ENCODE measurements at regions of chr11 and their contacts with region 1.

Region 1: DNA sequence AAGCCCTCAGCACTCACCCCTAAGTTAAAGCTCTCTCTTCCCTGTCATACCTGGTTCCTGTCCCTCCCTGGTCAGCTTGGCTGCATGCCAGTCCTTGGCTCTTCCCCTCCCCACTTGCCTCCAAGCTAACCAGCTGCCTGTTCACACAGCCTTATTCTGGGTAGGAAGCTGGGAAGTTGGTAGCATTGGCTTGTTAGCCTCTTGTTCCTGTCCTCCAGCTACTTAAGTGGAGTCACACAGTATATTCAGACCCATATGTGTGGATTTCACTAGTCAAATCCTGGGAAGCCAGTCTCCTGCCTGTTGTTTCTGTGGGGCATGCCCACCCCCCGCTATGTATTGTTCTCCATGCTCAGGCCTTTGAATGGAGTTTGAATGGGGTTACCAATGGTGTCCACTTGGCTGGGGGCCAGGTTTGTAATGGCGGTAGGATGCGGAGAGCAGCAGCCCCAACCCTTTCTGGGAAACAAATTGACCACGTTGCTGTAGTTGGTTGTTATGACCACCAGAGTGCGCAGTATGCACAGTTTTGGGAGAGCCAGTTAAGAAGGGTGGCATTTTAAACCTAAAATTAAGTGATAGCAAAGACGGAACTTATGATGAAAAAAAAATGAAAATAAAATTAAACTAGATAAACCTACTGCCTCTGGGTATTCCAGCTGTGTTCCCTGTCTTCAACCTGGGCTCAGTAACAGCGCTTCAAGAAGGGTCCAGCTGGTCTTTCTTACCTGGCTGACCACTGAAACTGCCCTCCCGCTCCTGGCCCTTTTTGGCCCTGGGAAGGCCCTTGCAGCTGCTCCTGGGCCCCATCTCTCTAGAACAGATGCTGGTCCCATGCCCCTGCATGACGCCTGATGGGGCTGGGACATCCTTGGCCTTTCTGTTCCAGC is 10.7 kb upstream of the RPS3 start:
- DNase-seq: peak; percentile 85
- H3K4me3 ChIP-seq: peak overlapping the region in 1 of 2 experiments; percentile 35; a peak in 1 of 4 replicates
- H3K27ac ChIP-seq: no peak overlapping the region
- H3K4me1 ChIP-seq: peaks cover 0 to 9% of the 10 kb centered on the region in 2 experiments; a peak in 1 of 4 replicates
- H3K27me3 ChIP-seq: no peaks in the 10 kb centered on the region
- CTCF ChIP-seq: peak; percentile 89
- EP300 ChIP-seq: no peak
- RAD21 ChIP-seq: peak; percentile 91

Region 2: GRCh38 chr11:75328426-75329277 is 60.0 kb before region 1 on chr11:
- CTCF ChIA-PET with region 1: interaction called, 15 read pairs
- POLR2A ChIA-PET with region 1: no interaction called
- DNase-seq: peak; percentile 87
- H3K4me3 ChIP-seq: no peak overlapping the region
- H3K27ac ChIP-seq: peak overlapping the region in 1 of 2 experiments; percentile 58; a peak in 2 of 4 replicates
- H3K4me1 ChIP-seq: peaks cover 11 to 23% of the 10 kb centered on the region in 2 experiments; a peak in 3 of 4 replicates
- H3K27me3 ChIP-seq: no peaks in the 10 kb centered on the region
- CTCF ChIP-seq: peak; percentile 73
- EP300 ChIP-seq: peak in 1 of 2 experiments; percentile 27; a peak in 2 of 4 replicates
- RAD21 ChIP-seq: peak; percentile 81

Region 3: GRCh38 chr11:75351791-75352587 is 36.6 kb before region 1 on chr11:
- CTCF ChIA-PET with region 1: interaction called, 10 read pairs
- POLR2A ChIA-PET with region 1: no interaction called
- DNase-seq: peak; percentile 92
- H3K4me3 ChIP-seq: peak overlapping the region; percentile 64 to 73
- H3K27ac ChIP-seq: peak overlapping the region in 1 of 2 experiments; percentile 96; a peak in 2 of 4 replicates
- H3K4me1 ChIP-seq: peaks cover 23 to 48% of the 10 kb centered on the region in 2 experiments; a peak in 3 of 4 replicates
- H3K27me3 ChIP-seq: no peaks in the 10 kb centered on the region
- CTCF ChIP-seq: no peak
- EP300 ChIP-seq: no peak
- RAD21 ChIP-seq: peak; percentile 35

Region 4: GRCh38 chr11:75399344-75400145 is 10.9 kb after region 1 on chr11 and contains the start of gene RPS3:
- CTCF ChIA-PET with region 1: interaction called, 35 read pairs
- POLR2A ChIA-PET with region 1: no interaction called
- DNase-seq: peak; percentile 90
- H3K4me3 ChIP-seq: peak within 1 kb of the TSS; percentile 90 to 93
- H3K27ac ChIP-seq: peak within 1 kb of the TSS; percentile 91 to 93
- H3K4me1 ChIP-seq: peaks cover 22 to 31% of the 10 kb centered on the region in 2 experiments
- H3K27me3 ChIP-seq: no peaks in the 10 kb centered on the region
- CTCF ChIP-seq: peak; percentile 48
- EP300 ChIP-seq: peak in 1 of 2 experiments; percentile 50; a peak in 1 of 4 replicates
- RAD21 ChIP-seq: no peak
- polyA plus RNA-seq, gene RPS3: 4,220 and 4,540 TPM in 2 replicates

Region 5: DNA sequence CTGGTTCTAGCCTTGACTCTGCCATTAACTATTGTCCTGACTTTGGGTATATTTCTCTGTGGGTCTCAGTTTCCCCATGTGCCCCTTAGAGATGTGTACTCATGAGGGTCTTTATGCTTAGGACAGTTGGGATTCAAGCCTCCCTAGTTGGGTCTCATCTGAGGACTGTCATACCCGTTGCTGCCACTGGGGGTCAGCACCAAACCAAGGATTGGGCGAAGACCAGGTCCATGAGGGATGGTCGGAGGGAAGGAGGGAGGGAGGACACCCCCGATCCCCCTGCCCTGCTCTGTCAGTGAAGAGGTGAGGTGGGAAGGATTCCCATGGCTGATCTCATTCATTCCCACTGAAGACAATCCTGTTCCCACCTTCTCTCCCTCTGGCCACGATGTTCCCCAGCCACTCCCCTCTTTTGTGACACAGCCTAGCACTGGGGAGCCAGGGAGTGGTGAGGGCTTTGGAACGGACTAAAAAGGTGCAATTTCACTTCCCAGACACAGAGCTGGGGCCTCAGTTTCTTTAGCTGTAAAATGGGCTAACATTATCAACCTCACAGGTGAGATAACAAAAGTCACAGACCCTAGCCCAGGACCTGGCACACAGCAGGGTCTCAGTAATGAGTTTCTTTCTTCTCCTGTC is 56.8 kb after region 1 on chr11:
- CTCF ChIA-PET with region 1: interaction called, 23 read pairs
- POLR2A ChIA-PET with region 1: no interaction called
- DNase-seq: peak; percentile 92
- H3K4me3 ChIP-seq: peak overlapping the region in 1 of 2 experiments; percentile 9; a peak in 1 of 4 replicates
- H3K27ac ChIP-seq: no peak overlapping the region
- H3K4me1 ChIP-seq: peaks cover 0 to 2% of the 10 kb centered on the region in 2 experiments; a peak in 1 of 4 replicates
- H3K27me3 ChIP-seq: no peaks in the 10 kb centered on the region
- CTCF ChIP-seq: peak; percentile 94
- EP300 ChIP-seq: no peak
- RAD21 ChIP-seq: peak; percentile 100

Region 6: GRCh38 chr11:75717608-75718418 is 329.2 kb after region 1 on chr11 and contains the start of gene MOGAT2:
- CTCF ChIA-PET with region 1: no interaction called
- POLR2A ChIA-PET with region 1: no interaction called
- DNase-seq: no peak
- H3K4me3 ChIP-seq: no peak within 1 kb of the TSS
- H3K27ac ChIP-seq: no peak within 1 kb of the TSS
- H3K4me1 ChIP-seq: peaks cover 0 to 15% of the 10 kb centered on the region in 2 experiments; a peak in 2 of 4 replicates
- H3K27me3 ChIP-seq: no peaks in the 10 kb centered on the region; the same call in 1 of the 2 replicates
- CTCF ChIP-seq: no peak
- EP300 ChIP-seq: no peak
- RAD21 ChIP-seq: no peak
- polyA plus RNA-seq, gene MOGAT2: 0.03 TPM in 1 of 2 replicates, not detected in the other